ENCODE measurements at regions of chrX and their contacts with region 1.

Region 1: GRCh38 chrX:49915361-49916222 is 6.8 kb upstream of the CLCN5 start:
- DNase-seq: peak in 2 of 5 donors; percentile 35 to 53
- H3K4me3 ChIP-seq: no peak overlapping the region
- H3K27ac ChIP-seq: no peak overlapping the region
- H3K4me1 ChIP-seq: no peaks in the 10 kb centered on the region
- H3K27me3 ChIP-seq: no peaks in the 10 kb centered on the region
- CTCF ChIP-seq: peak in 2 of 3 donors; percentile 39 to 58
- EP300 ChIP-seq: no peak
- POLR2A ChIP-seq: no peak

Region 2: GRCh38 chrX:50075630-50076339 is 160.2 kb after region 1 on chrX:
- intact Hi-C with region 1: loop called in 1 of 4 experiments (anchors 5 kb)
- DNase-seq: no peak
- H3K4me3 ChIP-seq: no peak overlapping the region
- H3K27ac ChIP-seq: no peak overlapping the region
- H3K4me1 ChIP-seq: no peaks in the 10 kb centered on the region
- H3K27me3 ChIP-seq: no peaks in the 10 kb centered on the region
- CTCF ChIP-seq: no peak
- EP300 ChIP-seq: no peak
- POLR2A ChIP-seq: no peak

Region 3: DNA sequence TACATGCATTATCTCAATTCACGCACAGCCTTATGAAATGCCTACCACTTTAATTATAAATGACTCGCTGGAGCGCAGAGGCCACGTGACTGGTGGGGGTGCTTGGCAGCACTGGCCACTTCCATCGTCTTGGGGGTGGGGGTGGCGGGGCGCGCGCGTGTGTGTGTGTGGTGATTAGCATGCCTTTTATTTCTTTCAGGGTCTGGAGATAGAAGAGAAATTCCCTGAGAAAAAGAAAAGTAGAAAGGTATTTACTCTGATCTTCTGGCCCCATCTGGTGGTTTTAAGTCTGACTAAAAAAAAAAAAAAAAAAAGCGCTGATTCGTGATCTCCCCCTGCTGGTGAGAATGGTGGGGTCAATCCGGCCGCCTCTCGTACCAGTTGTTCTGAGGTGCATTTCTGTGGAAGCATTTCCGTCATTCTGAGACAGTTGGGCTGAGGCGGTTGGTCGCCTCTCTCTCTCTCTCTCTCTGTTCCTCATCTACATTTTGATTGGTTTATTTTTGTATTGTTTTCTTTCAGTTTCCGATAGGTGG is 288.8 kb after region 1 on chrX and contains the start of gene CCNB3:
- intact Hi-C with region 1: loop called in 1 of 4 experiments (anchors 5 kb)
- DNase-seq: peak; percentile 57 to 76 (median 66)
- H3K4me3 ChIP-seq: peak within 1 kb of the TSS; percentile 20
- H3K27ac ChIP-seq: no peak within 1 kb of the TSS
- H3K4me1 ChIP-seq: no peaks in the 10 kb centered on the region
- H3K27me3 ChIP-seq: no peaks in the 10 kb centered on the region
- CTCF ChIP-seq: peak; percentile 48 to 53 (median 50)
- EP300 ChIP-seq: no peak
- POLR2A ChIP-seq: no peak
- total RNA-seq, gene CCNB3: 0.17 to 0.51 (median 0.27) TPM in 6 of 7 donors, not detected in the other